ENCODE measurements at regions of chr1 and their contacts with region 1.

Region 1: GRCh38 chr1:209827384-209828262 is at the start of gene UTP25:
- DNase-seq: peak; percentile 97
- ATAC-seq: peak; percentile 93
- H3K4me3 ChIP-seq: peak within 1 kb of the TSS; percentile 99
- H3K27ac ChIP-seq: peak within 1 kb of the TSS; percentile 62
- H3K4me1 ChIP-seq: no peaks in the 10 kb centered on the region
- H3K27me3 ChIP-seq: no peaks in the 10 kb centered on the region
- CTCF ChIP-seq: peak; percentile 75 to 81 (median 80)
- EP300 ChIP-seq: 0 out of 4 replicates have a peak, but pooled peaks of 1 of the 2 experiments have one; percentile 16
- POLR2A ChIP-seq: peak; percentile 79
- RAD21 ChIP-seq: no peak
- polyA plus RNA-seq, gene UTP25: 3.0 TPM

Region 2: GRCh38 chr1:209398313-209398991 is 429.2 kb before region 1 on chr1:
- CTCF ChIA-PET with region 1: no interaction called
- POLR2A ChIA-PET with region 1: no interaction called
- RAD21 ChIA-PET with region 1: no interaction called
- SMC1A ChIA-PET with region 1: no interaction called
- in situ Hi-C with region 1: no loop called
- intact Hi-C with region 1: no loop called
- DNase-seq: no peak
- ATAC-seq: peak; percentile 31; the same call in 1 of the 3 replicates
- H3K4me3 ChIP-seq: no peak overlapping the region
- H3K27ac ChIP-seq: no peak overlapping the region
- H3K4me1 ChIP-seq: no peaks in the 10 kb centered on the region
- H3K27me3 ChIP-seq: no peaks in the 10 kb centered on the region; a peak in 1 of 4 replicates
- CTCF ChIP-seq: no peak
- EP300 ChIP-seq: no peak
- POLR2A ChIP-seq: no peak
- RAD21 ChIP-seq: no peak

Region 3: DNA sequence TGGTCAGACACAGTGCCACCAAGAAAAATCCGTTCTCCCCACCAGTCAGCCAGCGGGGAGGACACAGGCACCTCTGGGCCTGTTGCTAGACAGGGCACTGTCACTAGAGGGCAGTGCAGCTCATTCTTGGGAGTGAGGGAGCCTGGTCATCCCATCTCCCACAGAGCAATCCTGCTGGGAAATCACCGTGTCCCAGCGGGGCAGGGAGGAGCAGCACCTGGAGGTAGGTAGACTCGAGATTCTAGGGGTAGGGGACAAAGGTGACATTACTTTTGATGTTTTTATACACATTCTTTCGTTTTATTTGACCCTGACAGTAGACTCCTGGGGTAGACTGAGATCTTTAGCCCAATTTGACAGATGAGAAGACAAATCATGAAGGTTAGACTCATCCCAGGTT is 250.8 kb before region 1 on chr1:
- CTCF ChIA-PET with region 1: interaction called, 5 read pairs
- POLR2A ChIA-PET with region 1: no interaction called
- RAD21 ChIA-PET with region 1: no interaction called
- SMC1A ChIA-PET with region 1: no interaction called
- in situ Hi-C with region 1: no loop called
- intact Hi-C with region 1: loop called (anchors 10 kb)
- DNase-seq: peak; percentile 12
- ATAC-seq: peak; percentile 99
- H3K4me3 ChIP-seq: no peak overlapping the region
- H3K27ac ChIP-seq: no peak overlapping the region
- H3K4me1 ChIP-seq: no peaks in the 10 kb centered on the region
- H3K27me3 ChIP-seq: peaks cover under 1 to 1% of the 10 kb centered on the region in 2 experiments; a peak in 3 of 4 replicates
- CTCF ChIP-seq: peak; percentile 93 to 96 (median 94)
- EP300 ChIP-seq: no peak
- POLR2A ChIP-seq: no peak
- RAD21 ChIP-seq: peak; percentile 86

Region 4: GRCh38 chr1:209723756-209724693 is 103.6 kb before region 1 on chr1:
- CTCF ChIA-PET with region 1: interaction called, 10 read pairs
- POLR2A ChIA-PET with region 1: no interaction called
- RAD21 ChIA-PET with region 1: no interaction called
- SMC1A ChIA-PET with region 1: no interaction called
- in situ Hi-C with region 1: no loop called
- intact Hi-C with region 1: no loop called
- DNase-seq: no peak
- ATAC-seq: peak; percentile 72
- H3K4me3 ChIP-seq: no peak overlapping the region
- H3K27ac ChIP-seq: no peak overlapping the region
- H3K4me1 ChIP-seq: no peaks in the 10 kb centered on the region; the same call in 1 of the 2 replicates
- H3K27me3 ChIP-seq: no peaks in the 10 kb centered on the region
- CTCF ChIP-seq: no peak
- EP300 ChIP-seq: no peak; a peak in 1 of 4 replicates
- POLR2A ChIP-seq: no peak
- RAD21 ChIP-seq: no peak

Region 5: GRCh38 chr1:209761011-209761635 is 66.5 kb before region 1 on chr1:
- CTCF ChIA-PET with region 1: interaction called, 55 read pairs
- POLR2A ChIA-PET with region 1: interaction called, 4 read pairs
- RAD21 ChIA-PET with region 1: interaction called, 11 read pairs
- SMC1A ChIA-PET with region 1: interaction called, 34 read pairs
- in situ Hi-C with region 1: no loop called
- intact Hi-C with region 1: no loop called
- DNase-seq: no peak
- ATAC-seq: no peak
- H3K4me3 ChIP-seq: no peak overlapping the region
- H3K27ac ChIP-seq: no peak overlapping the region
- H3K4me1 ChIP-seq: peaks cover 21% of the 10 kb centered on the region
- H3K27me3 ChIP-seq: no peaks in the 10 kb centered on the region
- CTCF ChIP-seq: no peak
- EP300 ChIP-seq: no peak
- POLR2A ChIP-seq: no peak
- RAD21 ChIP-seq: no peak

Region 6: DNA sequence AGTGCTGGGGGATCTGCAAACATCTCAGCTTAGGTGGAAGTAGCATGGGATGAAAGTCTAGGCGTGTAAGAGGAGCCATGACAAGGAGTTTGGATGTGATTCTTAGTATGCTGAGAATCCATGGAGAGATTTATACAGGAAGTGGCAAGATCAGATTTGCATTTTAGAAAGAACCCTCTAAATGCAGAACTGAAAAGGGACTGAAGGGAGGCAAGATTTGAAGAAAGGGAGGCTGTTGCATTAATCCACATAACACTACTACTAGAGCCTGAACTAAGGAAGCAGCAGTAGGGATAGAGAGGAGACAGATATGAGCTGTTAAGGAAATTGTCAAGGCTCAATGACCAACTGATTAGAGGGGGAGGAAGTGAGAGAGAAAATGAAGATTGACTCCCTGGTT is 53.0 kb before region 1 on chr1:
- CTCF ChIA-PET with region 1: interaction called, 56 read pairs
- POLR2A ChIA-PET with region 1: interaction called, 5 read pairs
- RAD21 ChIA-PET with region 1: interaction called, 5 read pairs
- SMC1A ChIA-PET with region 1: interaction called, 34 read pairs
- in situ Hi-C with region 1: no loop called
- intact Hi-C with region 1: no loop called
- DNase-seq: peak; percentile 32
- ATAC-seq: peak; percentile 82
- H3K4me3 ChIP-seq: peak overlapping the region; percentile 6
- H3K27ac ChIP-seq: peak overlapping the region; percentile 60
- H3K4me1 ChIP-seq: peaks cover 42% of the 10 kb centered on the region
- H3K27me3 ChIP-seq: no peaks in the 10 kb centered on the region
- CTCF ChIP-seq: no peak
- EP300 ChIP-seq: no peak; a peak in 1 of 4 replicates
- POLR2A ChIP-seq: no peak
- RAD21 ChIP-seq: no peak

Region 7: DNA sequence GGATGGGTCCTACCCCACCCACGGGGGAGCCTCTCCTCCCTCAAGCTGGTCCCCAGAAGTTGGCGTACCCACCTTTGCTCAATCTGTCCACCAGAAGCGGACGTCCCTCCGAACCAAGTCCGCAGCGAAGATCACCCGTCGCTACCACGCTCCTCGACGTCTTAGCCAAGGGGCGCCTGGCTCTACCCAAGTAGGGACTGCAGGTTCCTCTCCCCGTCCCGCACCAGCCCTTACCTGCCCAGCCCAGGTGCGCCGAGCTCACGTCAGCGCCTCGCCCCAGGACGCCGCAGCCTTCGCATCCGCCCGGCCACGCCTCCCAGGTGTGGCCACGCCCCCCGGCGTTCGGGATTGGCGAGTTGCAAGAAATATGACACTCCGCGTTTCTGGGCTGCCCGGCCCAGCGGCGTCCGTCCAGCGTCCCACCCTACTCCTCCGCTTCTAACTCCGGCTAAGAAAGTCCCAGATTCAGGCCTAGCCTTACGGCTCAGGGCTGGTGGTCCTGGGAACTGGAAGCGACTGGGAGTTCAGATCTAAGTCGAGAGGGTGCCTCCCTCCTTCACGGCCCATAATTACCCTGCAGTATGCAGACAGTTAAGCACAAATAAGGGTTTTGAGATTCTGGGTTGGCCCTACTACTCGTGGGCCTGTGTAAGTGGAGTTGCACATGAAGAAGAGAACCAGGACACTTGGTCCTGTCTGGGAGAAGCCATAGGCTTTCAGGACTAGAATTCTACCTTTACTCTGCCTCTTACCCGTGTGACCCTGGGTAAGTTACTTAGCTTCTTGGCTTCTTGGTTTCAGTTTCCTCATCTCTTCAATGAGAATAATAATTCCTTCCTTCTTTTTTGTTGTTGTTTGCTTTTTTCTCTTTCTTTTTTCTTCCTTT is 21.5 kb before region 1 on chr1 and contains the start of gene IRF6:
- CTCF ChIA-PET with region 1: interaction called, 78 read pairs
- POLR2A ChIA-PET with region 1: interaction called, 3 read pairs
- RAD21 ChIA-PET with region 1: interaction called, 4 read pairs
- SMC1A ChIA-PET with region 1: interaction called, 49 read pairs
- in situ Hi-C with region 1: no loop called
- intact Hi-C with region 1: no loop called
- DNase-seq: no peak
- ATAC-seq: no peak
- H3K4me3 ChIP-seq: no peak within 1 kb of the TSS
- H3K27ac ChIP-seq: no peak within 1 kb of the TSS
- H3K4me1 ChIP-seq: no peaks in the 10 kb centered on the region
- H3K27me3 ChIP-seq: peaks cover 0 to 2% of the 10 kb centered on the region in 2 experiments; a peak in 2 of 4 replicates
- CTCF ChIP-seq: no peak
- EP300 ChIP-seq: no peak
- POLR2A ChIP-seq: no peak
- RAD21 ChIP-seq: no peak
- polyA plus RNA-seq, gene IRF6: 0.04 to 0.05 TPM

Region 8: DNA sequence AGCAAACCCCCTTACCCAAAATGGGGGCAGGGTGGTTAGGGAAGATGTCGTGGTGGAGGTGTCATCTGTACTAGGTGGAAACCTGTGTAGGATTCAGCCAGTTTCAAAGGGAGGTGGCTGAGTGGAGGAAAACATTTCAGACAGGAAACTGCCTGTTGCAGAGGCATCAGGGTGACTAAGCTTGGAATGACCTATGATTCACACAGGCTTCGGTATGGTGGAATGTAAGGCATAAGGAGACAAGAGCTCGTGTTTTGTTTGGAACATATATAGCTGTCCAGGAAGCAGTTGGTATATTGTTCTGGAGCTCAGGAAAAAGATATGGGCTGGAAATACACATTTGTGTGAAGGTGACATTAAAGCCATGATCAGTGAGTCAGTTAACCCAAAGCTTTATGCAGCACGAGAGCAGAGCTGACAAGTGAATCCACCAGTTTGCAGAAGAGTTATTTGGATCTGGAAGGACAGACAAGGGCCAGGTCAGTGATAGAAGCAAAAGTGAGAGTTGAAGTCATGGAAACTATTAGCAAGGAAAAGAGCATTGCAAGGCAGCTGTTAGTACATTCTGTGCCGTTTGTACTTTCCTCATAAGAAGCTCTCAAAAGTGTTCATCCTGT is 12.4 kb after region 1 on chr1:
- CTCF ChIA-PET with region 1: interaction called, 39 read pairs
- POLR2A ChIA-PET with region 1: interaction called, 3 read pairs
- RAD21 ChIA-PET with region 1: no interaction called
- SMC1A ChIA-PET with region 1: interaction called, 8 read pairs
- in situ Hi-C with region 1: no loop called
- intact Hi-C with region 1: no loop called
- DNase-seq: no peak
- ATAC-seq: no peak
- H3K4me3 ChIP-seq: no peak overlapping the region
- H3K27ac ChIP-seq: no peak overlapping the region
- H3K4me1 ChIP-seq: no peaks in the 10 kb centered on the region
- H3K27me3 ChIP-seq: no peaks in the 10 kb centered on the region
- CTCF ChIP-seq: no peak
- EP300 ChIP-seq: no peak
- POLR2A ChIP-seq: no peak
- RAD21 ChIP-seq: no peak

Measured in GM12878 (cell line).